Testis (tissue), 5 donors: ENCODE measurements at regions of chr15 and their contacts with region 1.

Region 1: DNA sequence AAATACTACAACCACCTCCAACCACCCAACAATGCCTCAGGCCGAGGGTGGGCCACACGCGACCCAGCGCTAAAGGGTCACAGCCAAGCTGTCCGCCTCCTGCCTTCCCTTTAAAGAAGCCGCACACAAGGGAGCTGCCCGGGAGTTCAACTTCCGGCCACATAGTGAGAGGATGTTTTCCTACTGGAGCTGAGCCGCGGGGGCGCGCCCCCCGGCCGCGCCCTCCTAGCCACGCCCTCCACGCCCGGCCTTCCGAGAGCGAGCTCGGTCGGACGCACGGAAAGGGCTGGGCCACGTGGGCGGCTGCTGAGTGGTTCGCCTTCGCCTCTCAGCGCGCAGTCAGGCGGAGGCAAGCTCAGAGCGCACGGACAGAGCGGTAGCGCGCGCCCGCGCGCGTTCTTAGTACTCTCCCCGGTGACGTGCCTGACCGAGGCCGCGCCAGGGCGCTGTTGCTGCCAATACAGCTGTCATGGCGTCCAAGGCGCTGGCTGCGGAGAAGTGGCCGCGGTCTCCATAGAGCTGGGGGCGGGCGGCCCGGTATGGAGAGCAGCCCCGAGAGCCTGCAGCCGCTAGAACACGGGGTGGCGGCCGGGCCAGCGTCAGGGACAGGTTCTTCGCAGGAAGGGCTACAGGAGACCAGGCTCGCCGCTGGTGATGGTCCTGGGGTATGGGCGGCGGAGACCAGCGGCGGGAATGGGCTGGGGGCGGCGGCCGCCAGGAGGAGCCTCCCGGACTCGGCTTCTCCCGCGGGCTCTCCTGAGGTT is at the start of gene MINDY2:
- DNase-seq: peak; percentile 99
- H3K4me3 ChIP-seq: peak within 1 kb of the TSS; percentile 92 to 93
- H3K27ac ChIP-seq: peak within 1 kb of the TSS; percentile 95 to 96
- H3K4me1 ChIP-seq: peaks cover 19% of the 10 kb centered on the region
- H3K27me3 ChIP-seq: no peaks in the 10 kb centered on the region
- CTCF ChIP-seq: peak; percentile 24 to 41 (median 36)
- POLR2A ChIP-seq: peak; percentile 44
- total RNA-seq, gene MINDY2: 15.0 to 15.4 TPM

Region 2: GRCh38 chr15:58694641-58695398 is 76.2 kb before region 1 on chr15:
- intact Hi-C with region 1: no loop called
- DNase-seq: no peak
- H3K4me3 ChIP-seq: no peak overlapping the region
- H3K27ac ChIP-seq: no peak overlapping the region
- H3K4me1 ChIP-seq: no peaks in the 10 kb centered on the region
- H3K27me3 ChIP-seq: no peaks in the 10 kb centered on the region
- CTCF ChIP-seq: no peak
- POLR2A ChIP-seq: no peak

Region 3: DNA sequence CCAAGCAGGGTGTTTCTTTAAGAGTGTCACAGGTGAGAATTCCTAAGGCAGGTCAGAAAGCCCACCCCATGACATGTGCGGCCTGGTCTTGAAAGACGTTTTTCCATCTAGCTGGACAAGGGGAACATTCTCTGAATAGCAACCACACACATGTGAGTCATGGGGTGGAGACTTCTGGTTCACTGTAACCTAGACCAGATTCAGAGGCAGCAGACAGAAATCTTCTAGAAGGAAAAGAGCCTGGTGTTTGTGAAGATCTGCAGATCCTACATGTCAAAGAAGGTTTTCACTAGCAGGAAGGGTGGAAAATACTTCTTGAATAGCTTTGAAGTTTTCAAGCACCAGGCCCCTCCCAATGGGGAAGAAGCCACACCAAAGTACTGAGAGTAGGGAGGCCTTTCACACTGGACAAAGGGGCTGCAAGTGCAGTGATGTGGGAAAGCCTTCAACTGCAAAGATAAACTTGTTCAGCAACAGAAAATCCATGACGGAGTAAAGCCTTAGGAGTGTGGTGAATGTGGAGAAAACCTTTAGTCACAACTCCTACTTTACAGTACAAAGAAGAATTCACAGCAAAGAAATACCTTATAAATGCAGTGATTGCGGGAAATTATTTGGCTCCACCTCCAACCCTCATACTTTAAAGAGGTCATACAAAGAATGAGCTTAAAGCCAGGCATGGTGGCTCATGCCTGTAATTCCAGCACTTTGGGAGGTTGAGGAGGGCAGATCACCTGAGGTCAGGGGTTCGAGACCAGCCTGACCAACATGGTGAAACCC is 39.1 kb before region 1 on chr15:
- intact Hi-C with region 1: no loop called
- DNase-seq: no peak
- H3K4me3 ChIP-seq: no peak overlapping the region
- H3K27ac ChIP-seq: no peak overlapping the region
- H3K4me1 ChIP-seq: no peaks in the 10 kb centered on the region
- H3K27me3 ChIP-seq: no peaks in the 10 kb centered on the region
- CTCF ChIP-seq: no peak
- POLR2A ChIP-seq: no peak

Region 4: GRCh38 chr15:58749532-58750337 is 21.3 kb before region 1 on chr15 and contains the start of gene ADAM10:
- intact Hi-C with region 1: loop called (anchors 1 kb)
- DNase-seq: peak; percentile 99
- H3K4me3 ChIP-seq: peak within 1 kb of the TSS; percentile 82 to 92
- H3K27ac ChIP-seq: peak within 1 kb of the TSS; percentile 95 to 97
- H3K4me1 ChIP-seq: peaks cover 13% of the 10 kb centered on the region
- H3K27me3 ChIP-seq: no peaks in the 10 kb centered on the region
- CTCF ChIP-seq: no peak
- POLR2A ChIP-seq: peak; percentile 77
- total RNA-seq, gene ADAM10: 58.7 to 65.5 TPM